Prostate gland (tissue), 2 donors: ENCODE measurements at regions of chr14 and their contacts with region 1.

Region 1: GRCh38 chr14:73728717-73729330 is 14.6 kb upstream of the PNMA1 start:
- DNase-seq: peak; percentile 67
- H3K4me3 ChIP-seq: no peak overlapping the region
- H3K27ac ChIP-seq: peak overlapping the region; percentile 3 to 42
- H3K4me1 ChIP-seq: peaks cover 7% of the 10 kb centered on the region
- H3K27me3 ChIP-seq: no peaks in the 10 kb centered on the region
- CTCF ChIP-seq: peak; percentile 94 to 98 (median 95)
- POLR2A ChIP-seq: no peak

Region 2: DNA sequence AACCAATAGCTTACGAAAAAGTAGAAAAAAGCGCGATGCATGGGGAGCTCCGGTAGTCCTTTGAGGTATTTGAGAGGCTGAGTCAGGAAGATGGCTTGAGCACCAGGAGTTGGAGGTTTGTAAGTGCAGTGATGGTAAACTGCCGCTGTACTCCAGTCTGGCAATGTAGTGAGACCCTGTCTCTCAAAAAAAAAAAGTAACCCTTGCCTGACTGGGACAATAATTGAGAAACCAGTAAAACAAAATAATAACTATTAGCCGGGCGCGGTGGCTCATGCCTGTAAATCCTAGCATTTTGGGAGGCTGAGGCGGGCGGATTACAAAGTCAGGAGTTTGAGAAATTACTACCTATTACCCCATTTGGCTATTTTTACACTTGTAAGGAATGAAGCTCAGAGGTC is 160.4 kb before region 1 on chr14:
- intact Hi-C with region 1: loop called (anchors 10 kb)
- DNase-seq: no peak
- H3K4me3 ChIP-seq: peak overlapping the region; percentile 39 to 54
- H3K27ac ChIP-seq: peak overlapping the region; percentile 74 to 87
- H3K4me1 ChIP-seq: no peaks in the 10 kb centered on the region
- H3K27me3 ChIP-seq: no peaks in the 10 kb centered on the region
- CTCF ChIP-seq: no peak
- POLR2A ChIP-seq: no peak

Region 3: DNA sequence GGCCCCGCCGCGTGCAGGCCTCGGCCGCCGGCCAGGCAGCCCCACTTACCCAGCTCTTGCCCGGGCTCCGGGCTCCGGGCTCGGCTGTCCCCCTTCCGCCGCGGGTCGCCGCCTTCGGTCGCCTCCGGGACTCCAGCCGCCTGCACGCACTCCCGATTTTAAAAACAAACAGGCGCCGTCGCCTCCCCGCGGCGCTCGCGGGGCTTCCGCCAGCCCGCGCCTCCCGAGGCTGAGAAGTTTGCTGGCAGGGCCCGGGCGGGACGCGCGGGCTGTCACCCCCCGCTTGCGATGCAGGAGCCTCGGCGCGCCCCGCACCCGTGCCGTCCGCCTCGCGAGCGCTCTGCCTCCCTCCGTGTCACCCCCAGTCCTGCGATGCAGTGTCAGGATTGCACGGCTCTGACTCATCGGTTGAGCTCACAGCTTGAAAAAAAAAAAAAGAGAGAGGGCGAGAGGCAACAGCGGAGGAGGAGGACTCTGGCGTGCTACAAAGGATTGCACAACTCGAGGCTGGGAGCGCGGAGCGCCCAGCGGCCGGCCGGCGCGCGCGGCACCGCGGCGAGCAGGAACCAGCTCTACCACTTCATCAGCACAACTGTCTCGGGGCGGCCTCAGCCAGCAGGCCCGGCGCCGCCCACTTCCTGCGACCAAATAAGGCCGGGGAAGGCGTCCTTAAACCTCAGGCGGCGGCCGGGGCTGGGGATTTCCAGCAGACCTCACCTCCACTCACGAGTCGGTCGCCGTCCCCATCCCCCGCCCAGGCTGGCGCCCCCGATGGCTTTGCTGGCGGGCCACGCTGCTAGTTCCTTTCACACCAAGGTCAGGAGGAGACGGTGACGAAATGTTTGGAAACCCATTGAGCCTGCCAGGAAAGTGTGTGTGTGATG is 31.1 kb after region 1 on chr14:
- intact Hi-C with region 1: loop called (anchors 5 kb)
- DNase-seq: peak; percentile 98
- H3K4me3 ChIP-seq: peak overlapping the region; percentile 62 to 86
- H3K27ac ChIP-seq: peak overlapping the region; percentile 92 to 95
- H3K4me1 ChIP-seq: peaks cover 68% of the 10 kb centered on the region
- H3K27me3 ChIP-seq: no peaks in the 10 kb centered on the region
- CTCF ChIP-seq: peak in 2 of 4 experiments; percentile 18 to 22
- POLR2A ChIP-seq: peak; percentile 82

Region 4: GRCh38 chr14:73825551-73826188 is 96.8 kb after region 1 on chr14:
- intact Hi-C with region 1: loop called (anchors 1 kb)
- DNase-seq: peak; percentile 78
- H3K4me3 ChIP-seq: no peak overlapping the region
- H3K27ac ChIP-seq: no peak overlapping the region
- H3K4me1 ChIP-seq: no peaks in the 10 kb centered on the region
- H3K27me3 ChIP-seq: no peaks in the 10 kb centered on the region
- CTCF ChIP-seq: peak; percentile 49 to 92 (median 84)
- POLR2A ChIP-seq: no peak

Region 5: DNA sequence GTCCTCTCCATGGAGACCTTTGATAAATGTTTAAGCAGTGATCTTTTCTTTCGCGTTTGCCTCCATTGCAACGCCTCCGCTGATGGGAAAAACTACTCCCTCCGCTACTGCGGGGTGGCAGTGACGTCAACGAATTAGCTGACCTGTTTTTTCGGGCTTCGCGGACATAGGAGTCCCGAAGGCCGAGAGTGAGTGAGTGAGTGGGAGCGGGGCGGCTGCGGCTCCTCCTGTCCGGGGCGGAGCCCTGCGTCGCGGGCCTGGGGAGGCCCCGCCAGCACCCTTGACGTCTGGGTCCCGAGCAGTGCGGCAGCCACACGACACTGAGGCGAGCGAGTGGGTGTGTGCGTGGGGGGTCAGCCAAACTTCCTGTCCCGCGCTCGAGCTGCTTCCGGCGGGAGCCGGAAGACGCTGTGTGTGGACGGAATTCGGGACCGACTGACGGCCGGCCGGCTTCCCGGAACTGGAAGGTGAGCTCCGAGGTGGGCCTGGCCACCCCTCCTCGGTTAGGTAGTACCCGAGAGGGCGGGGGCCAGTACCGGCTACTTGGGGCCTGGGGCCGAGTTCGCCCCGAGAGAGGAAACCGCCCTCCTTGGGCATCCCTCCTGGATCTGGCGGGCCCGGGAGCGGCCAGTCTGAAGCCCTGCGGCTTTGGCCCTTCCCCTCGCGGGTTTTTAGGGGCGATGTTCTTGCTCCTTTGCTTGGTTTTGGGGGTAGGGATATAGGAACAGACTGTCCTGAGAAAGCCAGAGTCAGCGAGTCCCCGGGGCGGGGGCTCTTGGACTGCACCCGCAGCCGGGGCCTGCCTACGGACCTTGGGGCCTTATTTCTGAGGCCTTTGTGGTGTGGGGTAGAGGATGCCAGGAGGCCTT is 157.9 kb after region 1 on chr14 and contains the start of gene ZNF410:
- intact Hi-C with region 1: loop called (anchors 5 kb)
- DNase-seq: peak; percentile 92
- H3K4me3 ChIP-seq: peak within 1 kb of the TSS; percentile 56 to 74
- H3K27ac ChIP-seq: peak within 1 kb of the TSS; percentile 89 to 92
- H3K4me1 ChIP-seq: peaks cover 3% of the 10 kb centered on the region
- H3K27me3 ChIP-seq: no peaks in the 10 kb centered on the region
- CTCF ChIP-seq: no peak
- POLR2A ChIP-seq: peak; percentile 77
- total RNA-seq, gene ZNF410: 47.7 to 56.5 TPM

Region 6: GRCh38 chr14:73949744-73950734 is 221.2 kb after region 1 on chr14 and contains the starts of genes COQ6 and FAM161B:
- intact Hi-C with region 1: loop called (anchors 10 kb)
- DNase-seq: peak; percentile 94
- H3K4me3 ChIP-seq: peak within 1 kb of the TSS; percentile 61 to 83
- H3K27ac ChIP-seq: peak within 1 kb of the TSS; percentile 81 to 82
- H3K4me1 ChIP-seq: peaks cover 12% of the 10 kb centered on the region
- H3K27me3 ChIP-seq: no peaks in the 10 kb centered on the region
- CTCF ChIP-seq: peak in 3 of 4 experiments; percentile 5 to 27 (median 15)
- POLR2A ChIP-seq: peak; percentile 54
- total RNA-seq, gene COQ6: 26.1 to 59.9 TPM
- total RNA-seq, gene FAM161B: 9.3 to 13.8 TPM